ENCODE measurements at regions of chr1 and their contacts with region 1.

Region 1: GRCh38 chr1:150186789-150187559 is 37.3 kb downstream of the PLEKHO1 start:
- DNase-seq: peak in 1 of 2 experiments; percentile 64
- H3K4me3 ChIP-seq: no peak overlapping the region
- H3K4me3 Mint-ChIP-seq: no peak overlapping the region
- H3K27ac Mint-ChIP-seq: no peak overlapping the region
- H3K4me1 ChIP-seq: peaks cover 6% of the 10 kb centered on the region
- H3K4me1 Mint-ChIP-seq: peaks cover 4% of the 10 kb centered on the region
- H3K27me3 ChIP-seq: no peaks in the 10 kb centered on the region
- H3K27me3 Mint-ChIP-seq: no peaks in the 10 kb centered on the region
- CTCF ChIP-seq: peak; percentile 34 to 53

Region 2: DNA sequence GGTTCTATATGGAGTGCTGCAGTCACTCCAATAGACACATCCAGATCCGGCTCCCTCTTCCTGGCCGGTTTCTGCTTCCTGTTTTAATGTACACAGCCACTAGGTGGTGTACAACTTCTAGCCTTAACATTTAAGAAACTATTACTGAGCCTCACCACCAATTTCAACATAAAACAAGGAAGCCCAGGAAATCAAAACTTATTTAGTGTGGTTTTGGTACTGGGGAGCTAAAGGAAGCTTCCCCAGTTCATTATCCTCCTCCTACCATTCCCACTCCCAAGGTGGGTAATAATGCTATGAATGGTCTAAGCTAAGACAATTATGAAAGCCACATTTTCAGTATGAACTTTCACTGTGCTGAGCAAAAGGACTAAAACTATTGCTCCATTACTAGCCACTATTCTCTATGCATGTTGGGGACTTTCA is 224.8 kb before region 1 on chr1:
- CTCF ChIA-PET with region 1: interaction called, 13 read pairs
- POLR2A ChIA-PET with region 1: interaction called, 5 read pairs
- intact Hi-C with region 1: loop called (anchors 1 kb)
- DNase-seq: peak; percentile 59 to 69
- H3K4me3 ChIP-seq: no peak overlapping the region
- H3K4me3 Mint-ChIP-seq: no peak overlapping the region
- H3K27ac Mint-ChIP-seq: no peak overlapping the region
- H3K4me1 ChIP-seq: no peaks in the 10 kb centered on the region
- H3K4me1 Mint-ChIP-seq: no peaks in the 10 kb centered on the region
- H3K27me3 ChIP-seq: no peaks in the 10 kb centered on the region
- H3K27me3 Mint-ChIP-seq: no peaks in the 10 kb centered on the region
- CTCF ChIP-seq: peak; percentile 69 to 84

Region 3: GRCh38 chr1:150067184-150068036 is 119.6 kb before region 1 on chr1 and contains the start of gene VPS45:
- CTCF ChIA-PET with region 1: interaction called, 6 read pairs
- POLR2A ChIA-PET with region 1: interaction called, 3 read pairs
- intact Hi-C with region 1: loop called (anchors 5 kb)
- DNase-seq: peak; percentile 91
- H3K4me3 ChIP-seq: peak within 1 kb of the TSS; percentile 88
- H3K4me3 Mint-ChIP-seq: peak within 1 kb of the TSS; percentile 89
- H3K27ac Mint-ChIP-seq: peak within 1 kb of the TSS; percentile 87
- H3K4me1 ChIP-seq: peaks cover 9% of the 10 kb centered on the region; the same call in 1 of the 2 replicates
- H3K4me1 Mint-ChIP-seq: peaks cover 7% of the 10 kb centered on the region
- H3K27me3 ChIP-seq: no peaks in the 10 kb centered on the region
- H3K27me3 Mint-ChIP-seq: no peaks in the 10 kb centered on the region
- CTCF ChIP-seq: no peak
- total RNA-seq, gene VPS45: 19.8 and 25.0 TPM in 2 replicates

Region 4: GRCh38 chr1:150162862-150163706 is 23.9 kb before region 1 on chr1:
- CTCF ChIA-PET with region 1: interaction called, 6 read pairs
- POLR2A ChIA-PET with region 1: no interaction called
- intact Hi-C with region 1: loop called (anchors 2 kb)
- DNase-seq: peak; percentile 79 to 85
- H3K4me3 ChIP-seq: 0 out of 2 replicates have a peak overlapping the region, but pooled peaks have one; percentile 2
- H3K4me3 Mint-ChIP-seq: peak overlapping the region; percentile 62
- H3K27ac Mint-ChIP-seq: peak overlapping the region; percentile 87
- H3K4me1 ChIP-seq: peaks cover 29% of the 10 kb centered on the region
- H3K4me1 Mint-ChIP-seq: peaks cover 27% of the 10 kb centered on the region
- H3K27me3 ChIP-seq: no peaks in the 10 kb centered on the region
- H3K27me3 Mint-ChIP-seq: no peaks in the 10 kb centered on the region
- CTCF ChIP-seq: no peak

Region 5: GRCh38 chr1:150168960-150169601 is 17.9 kb before region 1 on chr1:
- CTCF ChIA-PET with region 1: interaction called, 22 read pairs
- POLR2A ChIA-PET with region 1: no interaction called
- intact Hi-C with region 1: no loop called
- DNase-seq: peak; percentile 71 to 80
- H3K4me3 ChIP-seq: no peak overlapping the region
- H3K4me3 Mint-ChIP-seq: no peak overlapping the region
- H3K27ac Mint-ChIP-seq: no peak overlapping the region
- H3K4me1 ChIP-seq: peaks cover 25% of the 10 kb centered on the region
- H3K4me1 Mint-ChIP-seq: peaks cover 22% of the 10 kb centered on the region
- H3K27me3 ChIP-seq: no peaks in the 10 kb centered on the region
- H3K27me3 Mint-ChIP-seq: no peaks in the 10 kb centered on the region
- CTCF ChIP-seq: peak; percentile 74 to 87

Measured in Caco-2 (cell line).